ENCODE measurements at regions of chr3 and their contacts with region 1.

Region 1: DNA sequence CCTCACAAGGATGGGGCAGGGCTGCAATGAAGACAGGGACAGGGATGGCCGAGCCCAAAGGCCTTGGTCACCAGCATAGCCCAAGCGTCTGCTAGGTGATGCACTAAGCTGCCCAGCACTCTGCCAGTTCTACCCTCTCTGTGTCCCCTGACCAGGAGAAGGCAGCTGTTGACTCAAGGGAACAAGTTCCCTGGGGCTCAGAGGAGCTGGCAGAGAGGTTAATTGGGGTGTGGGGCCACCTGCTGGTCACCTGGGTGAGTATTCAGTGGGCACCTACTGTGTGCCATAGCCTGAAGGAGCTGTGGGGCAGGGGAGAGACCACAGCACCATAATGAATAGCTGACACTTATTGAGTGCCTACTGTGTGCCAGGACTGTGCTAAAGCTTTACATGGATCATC is 22.0 kb upstream of the DOCK3 start:
- DNase-seq: no peak
- ATAC-seq: peak; percentile 81
- H3K4me3 ChIP-seq: no peak overlapping the region
- H3K27ac ChIP-seq: no peak overlapping the region
- H3K4me1 ChIP-seq: peaks cover 5 to 23% of the 10 kb centered on the region in 2 experiments
- H3K27me3 ChIP-seq: no peaks in the 10 kb centered on the region
- CTCF ChIP-seq: peak; percentile 64 to 75 (median 65)
- POLR2A ChIP-seq: no peak
- RAD21 ChIP-seq: peak; percentile 92

Region 2: DNA sequence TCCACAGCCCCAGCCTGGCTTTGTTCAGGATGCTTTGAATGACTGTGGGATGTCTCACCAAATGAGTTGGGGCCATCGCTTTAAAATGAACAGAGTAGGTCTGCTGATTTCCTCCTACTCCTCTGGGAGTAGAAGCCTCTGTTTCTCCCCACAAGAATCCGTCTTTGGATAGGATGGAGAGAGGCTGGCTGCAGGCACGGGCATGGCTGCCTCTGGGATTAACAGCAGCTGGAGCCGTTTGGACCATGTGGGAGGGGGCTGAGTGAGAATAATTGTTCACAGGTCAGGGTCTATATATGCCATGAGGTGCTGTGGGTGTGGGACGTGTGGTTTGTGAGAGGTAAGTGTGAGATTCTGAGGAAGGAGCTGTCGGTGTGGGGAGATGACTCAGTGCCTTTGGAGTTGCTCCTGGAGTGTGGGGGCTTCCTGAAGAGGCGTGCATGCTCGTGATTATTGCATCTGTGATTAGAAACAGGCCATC is 1026.6 kb before region 1 on chr3:
- CTCF ChIA-PET with region 1: no interaction called
- POLR2A ChIA-PET with region 1: no interaction called
- RAD21 ChIA-PET with region 1: no interaction called
- intact Hi-C with region 1: no loop called
- DNase-seq: no peak
- ATAC-seq: no peak
- H3K4me3 ChIP-seq: no peak overlapping the region
- H3K27ac ChIP-seq: no peak overlapping the region
- H3K4me1 ChIP-seq: no peaks in the 10 kb centered on the region
- H3K27me3 ChIP-seq: no peaks in the 10 kb centered on the region
- CTCF ChIP-seq: no peak
- POLR2A ChIP-seq: no peak
- RAD21 ChIP-seq: no peak

Region 3: DNA sequence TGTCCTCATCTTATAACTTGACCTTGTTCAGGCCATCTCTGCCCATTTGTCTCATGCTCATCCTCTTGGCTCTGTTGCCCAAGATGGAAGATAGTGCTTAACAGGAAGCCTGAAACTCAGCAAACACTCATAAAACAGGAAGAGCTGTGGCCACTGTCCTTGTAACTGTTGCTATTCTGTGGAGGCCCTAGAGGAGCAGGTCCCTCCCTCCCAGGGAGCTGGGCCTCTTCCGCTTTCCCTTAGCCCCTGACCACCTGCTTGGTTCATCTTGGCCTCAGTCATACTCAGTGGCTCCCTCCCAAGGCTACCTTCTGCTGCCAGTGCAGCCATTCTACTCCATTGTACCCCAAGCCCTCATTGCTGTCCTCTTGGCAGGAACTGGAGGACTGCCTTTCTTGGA is 32.3 kb before region 1 on chr3:
- CTCF ChIA-PET with region 1: interaction called, 83 read pairs
- POLR2A ChIA-PET with region 1: interaction called, 8 read pairs
- RAD21 ChIA-PET with region 1: interaction called, 21 to 40 read pairs
- intact Hi-C with region 1: loop called (anchors 1 kb)
- DNase-seq: no peak
- ATAC-seq: no peak
- H3K4me3 ChIP-seq: no peak overlapping the region
- H3K27ac ChIP-seq: 0 out of 2 replicates have a peak overlapping the region, but pooled peaks have one; percentile 9
- H3K4me1 ChIP-seq: peaks cover 35 to 76% of the 10 kb centered on the region in 2 experiments
- H3K27me3 ChIP-seq: no peaks in the 10 kb centered on the region
- CTCF ChIP-seq: 0 out of 6 replicates have a peak, but pooled peaks of 1 of the 3 experiments have one; percentile 6
- POLR2A ChIP-seq: no peak
- RAD21 ChIP-seq: no peak

Region 4: GRCh38 chr3:50627407-50628051 is 25.2 kb before region 1 on chr3:
- CTCF ChIA-PET with region 1: interaction called, 29 read pairs
- POLR2A ChIA-PET with region 1: interaction called, 8 read pairs
- RAD21 ChIA-PET with region 1: interaction called, 9 to 12 read pairs
- intact Hi-C with region 1: no loop called
- DNase-seq: peak; percentile 88
- ATAC-seq: peak; percentile 91
- H3K4me3 ChIP-seq: peak overlapping the region; percentile 27 to 41
- H3K27ac ChIP-seq: peak overlapping the region; percentile 87
- H3K4me1 ChIP-seq: peaks cover 65 to 98% of the 10 kb centered on the region in 2 experiments
- H3K27me3 ChIP-seq: no peaks in the 10 kb centered on the region
- CTCF ChIP-seq: peak in 2 of 3 experiments; percentile 60 to 65; a peak in 4 of 6 replicates
- POLR2A ChIP-seq: no peak
- RAD21 ChIP-seq: no peak

Measured in HCT116 (cell line).